ENCODE measurements at regions of chr7 and their contacts with region 1.

Region 1: DNA sequence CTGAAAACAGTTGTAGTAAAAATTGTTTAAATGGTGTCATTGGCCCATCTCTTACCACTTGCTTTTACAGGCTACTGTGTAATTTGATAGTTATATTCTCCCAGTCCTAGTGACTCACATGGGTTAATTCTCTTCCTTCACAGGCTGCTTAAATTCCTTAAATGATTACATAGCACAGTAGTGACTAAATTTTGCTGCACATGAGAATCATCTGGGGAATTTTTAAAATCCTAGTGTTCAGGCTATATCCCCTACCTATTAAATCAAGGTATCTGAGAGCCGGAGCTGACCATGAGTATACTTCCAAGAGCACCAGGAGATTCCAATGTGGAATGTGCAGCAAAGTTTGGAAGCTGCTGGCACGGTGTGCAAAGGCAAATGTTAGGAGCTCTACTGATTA is 45.3 kb upstream of the ZNF800 start:
- DNase-seq: peak; percentile 81
- ATAC-seq: peak; percentile 99
- H3K4me3 ChIP-seq: no peak overlapping the region
- H3K27ac ChIP-seq: no peak overlapping the region
- H3K4me1 ChIP-seq: peaks cover 19% of the 10 kb centered on the region
- H3K27me3 ChIP-seq: no peaks in the 10 kb centered on the region
- CTCF ChIP-seq: no peak

Region 2: GRCh38 chr7:127214956-127215718 is 222.7 kb before region 1 on chr7:
- CTCF ChIA-PET with region 1: no interaction called
- POLR2A ChIA-PET with region 1: no interaction called
- intact Hi-C with region 1: no loop called
- DNase-seq: no peak
- ATAC-seq: no peak
- H3K4me3 ChIP-seq: no peak overlapping the region
- H3K27ac ChIP-seq: no peak overlapping the region
- H3K4me1 ChIP-seq: no peaks in the 10 kb centered on the region
- H3K27me3 ChIP-seq: no peaks in the 10 kb centered on the region
- CTCF ChIP-seq: no peak

Region 3: GRCh38 chr7:127392566-127393367 is 45.1 kb before region 1 on chr7 and contains the start of gene ZNF800:
- CTCF ChIA-PET with region 1: no interaction called
- POLR2A ChIA-PET with region 1: no interaction called
- intact Hi-C with region 1: loop called (anchors 5 kb)
- DNase-seq: peak; percentile 77
- ATAC-seq: peak; percentile 88
- H3K4me3 ChIP-seq: peak within 1 kb of the TSS; percentile 99
- H3K27ac ChIP-seq: peak within 1 kb of the TSS; percentile 63
- H3K4me1 ChIP-seq: peaks cover 21% of the 10 kb centered on the region
- H3K27me3 ChIP-seq: no peaks in the 10 kb centered on the region
- CTCF ChIP-seq: no peak
- total RNA-seq, gene ZNF800: 13.2 and 18.5 TPM in 2 replicates